Adrenal gland (tissue), 19 donors: ENCODE measurements at regions of chr7 and their contacts with region 1.

Region 1: DNA sequence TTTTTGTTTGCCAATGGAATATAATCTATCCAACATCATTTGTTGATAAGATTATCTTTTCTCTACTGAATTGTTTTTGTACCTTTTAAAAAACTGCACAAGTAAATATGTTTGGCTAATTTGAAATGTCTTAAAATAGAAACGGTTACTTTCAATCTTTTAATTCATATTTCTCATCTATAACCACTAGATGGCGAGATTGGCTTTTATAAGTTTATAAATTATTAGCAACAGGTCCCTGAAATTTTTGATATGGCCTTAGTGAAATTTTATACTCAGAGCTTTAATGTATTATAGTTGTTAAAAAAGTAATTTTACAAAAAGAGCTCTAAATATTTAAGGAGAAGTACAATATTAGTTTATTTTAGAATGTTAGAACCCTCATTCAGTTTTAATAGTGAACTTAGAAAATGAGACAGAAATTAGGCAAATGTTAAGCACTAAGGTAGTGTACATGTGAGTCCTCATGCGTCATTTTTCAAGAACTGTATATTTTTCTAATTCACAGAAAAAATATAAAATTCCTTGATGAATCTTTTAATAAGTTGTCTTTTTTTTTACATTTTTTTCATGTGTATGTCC is 592.5 kb downstream of the ARL4A start:
- DNase-seq: no peak
- H3K4me3 ChIP-seq: no peak overlapping the region
- H3K27ac ChIP-seq: no peak overlapping the region
- H3K4me1 ChIP-seq: no peaks in the 10 kb centered on the region
- H3K27me3 ChIP-seq: no peaks in the 10 kb centered on the region
- CTCF ChIP-seq: peak; percentile 8 to 67 (median 42)
- POLR2A ChIP-seq: no peak

Region 2: DNA sequence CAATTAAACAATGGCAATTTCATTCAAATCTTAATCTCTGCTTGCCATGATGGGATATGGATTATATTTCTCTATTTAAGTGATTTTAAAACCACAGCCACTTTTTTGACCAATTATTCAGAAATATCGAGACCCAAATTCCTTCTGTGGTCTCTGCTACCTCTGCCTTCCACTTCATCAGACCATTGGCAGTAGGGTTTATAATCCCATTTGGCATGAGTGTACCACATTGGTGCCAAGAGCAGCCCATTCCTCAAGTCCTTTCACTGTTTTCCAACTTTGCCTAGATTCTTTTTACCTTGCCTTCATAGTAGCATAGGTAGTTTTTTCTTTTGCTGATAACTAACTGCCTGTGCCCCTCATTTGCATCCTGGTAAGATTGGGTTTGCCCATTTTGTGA is 272.6 kb before region 1 on chr7:
- intact Hi-C with region 1: no loop called
- DNase-seq: no peak
- H3K4me3 ChIP-seq: no peak overlapping the region
- H3K27ac ChIP-seq: no peak overlapping the region
- H3K4me1 ChIP-seq: no peaks in the 10 kb centered on the region
- H3K27me3 ChIP-seq: no peaks in the 10 kb centered on the region
- CTCF ChIP-seq: no peak
- POLR2A ChIP-seq: no peak

Region 3: GRCh38 chr7:14457568-14458453 is 1177.9 kb after region 1 on chr7:
- intact Hi-C with region 1: loop called in 1 of 2 experiments (anchors 10 kb)
- DNase-seq: peak; percentile 72 to 91 (median 80)
- H3K4me3 ChIP-seq: peak overlapping the region in 1 of 4 donors; percentile 17
- H3K27ac ChIP-seq: no peak overlapping the region
- H3K4me1 ChIP-seq: no peaks in the 10 kb centered on the region
- H3K27me3 ChIP-seq: no peaks in the 10 kb centered on the region
- CTCF ChIP-seq: peak; percentile 72 to 97 (median 80)
- POLR2A ChIP-seq: no peak

Region 4: GRCh38 chr7:14691597-14692203 is 1411.8 kb after region 1 on chr7:
- intact Hi-C with region 1: loop called in 1 of 2 experiments (anchors 10 kb)
- DNase-seq: peak in 6 of 7 donors; percentile 33 to 84 (median 53)
- H3K4me3 ChIP-seq: no peak overlapping the region
- H3K27ac ChIP-seq: no peak overlapping the region
- H3K4me1 ChIP-seq: no peaks in the 10 kb centered on the region
- H3K27me3 ChIP-seq: no peaks in the 10 kb centered on the region
- CTCF ChIP-seq: peak; percentile 58 to 90 (median 75)
- POLR2A ChIP-seq: no peak